Transverse colon (tissue), 4 donors: ENCODE measurements at regions of chr18 and their contacts with region 1.

Region 1: DNA sequence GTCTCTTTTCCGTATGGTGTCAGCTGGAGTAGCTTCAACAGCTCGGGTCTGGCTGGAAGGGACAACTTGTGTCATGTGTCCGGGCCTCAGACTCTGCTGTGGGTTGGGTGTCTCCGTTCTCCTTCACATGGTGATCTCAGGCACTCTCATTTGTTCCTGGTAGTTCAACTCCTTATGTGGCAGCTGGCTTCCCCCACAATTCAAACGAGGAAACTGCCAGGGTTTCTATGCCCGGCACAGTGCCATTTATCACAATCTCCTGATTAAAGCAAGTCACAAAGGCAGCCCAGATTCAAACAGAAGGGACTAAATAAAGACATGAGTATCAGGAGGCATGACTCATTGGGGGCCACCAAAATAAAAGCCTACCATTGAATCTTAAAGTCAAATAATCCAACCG is 22.7 kb downstream of the MRO start:
- DNase-seq: no peak
- H3K4me3 ChIP-seq: no peak overlapping the region
- H3K27ac ChIP-seq: no peak overlapping the region
- H3K4me1 ChIP-seq: no peaks in the 10 kb centered on the region
- H3K27me3 ChIP-seq: no peaks in the 10 kb centered on the region
- CTCF ChIP-seq: no peak
- EP300 ChIP-seq: no peak
- POLR2A ChIP-seq: no peak

Region 2: DNA sequence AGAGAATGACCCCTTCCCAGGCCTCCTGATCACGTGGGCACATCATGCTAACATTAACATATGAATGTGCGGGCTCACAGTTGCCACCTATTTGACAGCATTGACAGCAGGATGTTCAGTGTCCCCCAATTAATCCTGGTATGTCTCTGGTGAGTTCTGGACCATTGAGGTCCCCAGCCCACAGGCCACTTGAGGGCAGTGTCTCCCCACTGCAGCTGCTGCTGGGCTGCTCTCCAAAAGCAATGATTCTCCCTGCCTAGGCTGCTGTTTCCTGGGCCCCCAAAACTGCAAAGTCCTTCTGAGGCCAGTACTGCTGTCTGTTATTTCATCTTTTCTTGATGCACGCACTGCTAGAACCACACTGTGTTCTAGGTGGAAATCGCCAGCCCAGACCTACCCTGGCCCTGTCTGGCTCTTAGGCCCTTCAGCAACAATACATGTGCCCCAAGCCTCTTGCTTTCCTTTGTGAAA is 290.0 kb before region 1 on chr18:
- in situ Hi-C with region 1: loop called in 2 of 4 experiments (anchors 25 kb)
- intact Hi-C with region 1: no loop called
- DNase-seq: peak; percentile 46
- H3K4me3 ChIP-seq: no peak overlapping the region
- H3K27ac ChIP-seq: no peak overlapping the region
- H3K4me1 ChIP-seq: no peaks in the 10 kb centered on the region
- H3K27me3 ChIP-seq: peaks cover 6% of the 10 kb centered on the region
- CTCF ChIP-seq: peak; percentile 48 to 69 (median 62)
- EP300 ChIP-seq: no peak
- POLR2A ChIP-seq: no peak